ENCODE measurements at regions of chr17 and their contacts with region 1.

Region 1: GRCh38 chr17:20315821-20316220 is 151.5 kb downstream of the LGALS9B start:
- DNase-seq: no peak
- ATAC-seq: no peak
- H3K4me3 ChIP-seq: no peak overlapping the region
- H3K27ac ChIP-seq: no peak overlapping the region
- H3K4me1 ChIP-seq: no peaks in the 10 kb centered on the region
- H3K27me3 ChIP-seq: no peaks in the 10 kb centered on the region
- CTCF ChIP-seq: no peak
- EP300 ChIP-seq: no peak
- POLR2A ChIP-seq: no peak
- RAD21 ChIP-seq: no peak

Region 2: GRCh38 chr17:19992803-19993713 is 322.8 kb before region 1 on chr17:
- CTCF ChIA-PET with region 1: interaction called, 7 read pairs
- POLR2A ChIA-PET with region 1: no interaction called
- RAD21 ChIA-PET with region 1: no interaction called
- SMC1A ChIA-PET with region 1: no interaction called
- in situ Hi-C with region 1: loop called (anchors 5 kb)
- intact Hi-C with region 1: no loop called
- DNase-seq: peak; percentile 20
- ATAC-seq: peak; percentile 100
- H3K4me3 ChIP-seq: no peak overlapping the region
- H3K27ac ChIP-seq: no peak overlapping the region
- H3K4me1 ChIP-seq: no peaks in the 10 kb centered on the region
- H3K27me3 ChIP-seq: no peaks in the 10 kb centered on the region; a peak in 1 of 4 replicates
- CTCF ChIP-seq: peak; percentile 66 to 83 (median 67)
- EP300 ChIP-seq: no peak
- POLR2A ChIP-seq: no peak
- RAD21 ChIP-seq: peak; percentile 82

Region 3: DNA sequence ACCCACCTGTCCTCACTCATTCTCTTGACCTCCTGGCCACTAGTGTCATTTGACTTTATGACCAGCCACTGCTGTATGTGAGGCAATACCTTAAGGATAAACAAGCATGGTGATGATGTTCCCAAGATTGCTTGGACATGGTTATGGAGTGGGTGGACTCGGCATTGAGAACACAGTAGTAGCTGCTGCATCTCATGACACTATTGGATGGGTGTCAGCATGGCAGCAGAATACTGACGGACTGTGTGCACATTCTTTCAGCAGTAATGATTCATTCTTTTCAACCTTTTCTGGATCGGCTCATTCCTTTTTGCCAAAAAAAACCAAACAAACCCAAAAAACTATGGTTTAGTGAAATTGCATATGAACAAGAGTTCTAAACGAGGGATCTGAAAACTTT is 293.1 kb before region 1 on chr17:
- CTCF ChIA-PET with region 1: no interaction called
- POLR2A ChIA-PET with region 1: no interaction called
- RAD21 ChIA-PET with region 1: no interaction called
- SMC1A ChIA-PET with region 1: no interaction called
- in situ Hi-C with region 1: no loop called
- intact Hi-C with region 1: no loop called
- DNase-seq: no peak
- ATAC-seq: no peak
- H3K4me3 ChIP-seq: no peak overlapping the region
- H3K27ac ChIP-seq: no peak overlapping the region
- H3K4me1 ChIP-seq: no peaks in the 10 kb centered on the region
- H3K27me3 ChIP-seq: no peaks in the 10 kb centered on the region
- CTCF ChIP-seq: no peak
- EP300 ChIP-seq: no peak
- POLR2A ChIP-seq: no peak
- RAD21 ChIP-seq: no peak

Region 4: GRCh38 chr17:20121359-20122253 is 194.2 kb before region 1 on chr17:
- CTCF ChIA-PET with region 1: interaction called, 5 read pairs
- POLR2A ChIA-PET with region 1: no interaction called
- RAD21 ChIA-PET with region 1: no interaction called
- SMC1A ChIA-PET with region 1: interaction called, 3 read pairs
- in situ Hi-C with region 1: no loop called
- intact Hi-C with region 1: loop called (anchors 2 kb)
- DNase-seq: peak; percentile 23
- ATAC-seq: peak; percentile 92
- H3K4me3 ChIP-seq: no peak overlapping the region
- H3K27ac ChIP-seq: no peak overlapping the region
- H3K4me1 ChIP-seq: no peaks in the 10 kb centered on the region
- H3K27me3 ChIP-seq: no peaks in the 10 kb centered on the region
- CTCF ChIP-seq: peak; percentile 79 to 95 (median 91)
- EP300 ChIP-seq: no peak
- POLR2A ChIP-seq: no peak
- RAD21 ChIP-seq: peak; percentile 98

Region 5: DNA sequence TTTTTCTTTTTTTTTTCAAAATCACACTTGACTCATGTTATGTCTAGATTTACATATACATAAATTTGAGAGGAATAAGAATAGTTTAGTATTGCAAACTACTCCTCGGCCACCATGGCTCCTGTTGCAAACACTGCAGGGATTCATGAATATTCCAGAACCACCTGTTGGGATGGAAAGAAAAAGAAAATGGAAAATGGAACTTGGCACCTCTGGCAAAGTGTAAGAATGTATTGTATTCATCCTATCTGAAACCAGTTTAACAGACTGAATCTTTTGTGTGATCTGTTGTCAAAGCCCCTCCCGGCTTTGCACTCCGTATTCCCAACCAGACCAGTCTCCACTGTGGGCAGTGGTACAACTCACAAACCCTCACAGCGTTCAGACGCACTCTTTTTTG is 182.3 kb before region 1 on chr17:
- CTCF ChIA-PET with region 1: no interaction called
- POLR2A ChIA-PET with region 1: no interaction called
- RAD21 ChIA-PET with region 1: no interaction called
- SMC1A ChIA-PET with region 1: no interaction called
- in situ Hi-C with region 1: loop called (anchors 10 kb)
- intact Hi-C with region 1: no loop called
- DNase-seq: no peak
- ATAC-seq: no peak
- H3K4me3 ChIP-seq: no peak overlapping the region
- H3K27ac ChIP-seq: no peak overlapping the region
- H3K4me1 ChIP-seq: no peaks in the 10 kb centered on the region
- H3K27me3 ChIP-seq: no peaks in the 10 kb centered on the region
- CTCF ChIP-seq: no peak
- EP300 ChIP-seq: no peak
- POLR2A ChIP-seq: no peak
- RAD21 ChIP-seq: no peak

Region 6: DNA sequence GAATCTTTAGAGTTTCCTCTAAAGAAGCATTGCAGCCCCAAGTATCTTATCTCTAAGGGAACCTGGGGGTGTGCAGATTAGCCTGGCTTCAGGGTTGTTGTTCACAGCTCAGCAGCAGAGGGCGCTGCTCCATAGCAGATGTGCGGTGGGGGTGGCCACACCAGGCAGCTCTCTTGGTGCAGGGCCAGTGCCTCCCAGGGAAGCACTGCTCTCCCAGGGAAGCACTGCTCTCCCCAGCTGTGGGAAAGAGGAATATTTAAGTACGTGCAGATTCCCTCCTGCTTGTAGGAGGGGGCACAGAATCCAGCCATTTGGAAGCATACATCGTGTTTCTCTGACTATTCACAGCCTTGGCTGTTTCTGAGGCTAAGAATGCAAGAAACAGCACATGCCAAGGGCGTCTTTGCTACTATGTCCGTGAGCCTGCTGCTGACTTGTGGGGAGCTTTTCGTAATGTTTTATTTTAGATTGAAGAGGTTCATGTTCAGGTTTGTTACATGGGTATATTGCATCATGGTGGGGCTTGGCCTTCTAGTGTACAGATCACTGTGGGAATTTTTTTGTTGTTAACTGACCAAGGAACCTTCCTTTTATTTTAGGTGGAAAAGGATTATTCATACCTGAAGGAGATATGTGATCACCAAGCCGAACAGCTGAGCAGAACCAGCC is 88.9 kb before region 1 on chr17:
- CTCF ChIA-PET with region 1: interaction called, 13 read pairs
- POLR2A ChIA-PET with region 1: no interaction called
- RAD21 ChIA-PET with region 1: interaction called, 4 read pairs
- SMC1A ChIA-PET with region 1: no interaction called
- in situ Hi-C with region 1: loop called (anchors 5 kb)
- intact Hi-C with region 1: loop called (anchors 5 kb)
- DNase-seq: no peak
- ATAC-seq: peak; percentile 98
- H3K4me3 ChIP-seq: no peak overlapping the region
- H3K27ac ChIP-seq: no peak overlapping the region
- H3K4me1 ChIP-seq: no peaks in the 10 kb centered on the region
- H3K27me3 ChIP-seq: no peaks in the 10 kb centered on the region
- CTCF ChIP-seq: peak; percentile 86 to 87 (median 86)
- EP300 ChIP-seq: no peak
- POLR2A ChIP-seq: no peak
- RAD21 ChIP-seq: peak; percentile 84

Region 7: DNA sequence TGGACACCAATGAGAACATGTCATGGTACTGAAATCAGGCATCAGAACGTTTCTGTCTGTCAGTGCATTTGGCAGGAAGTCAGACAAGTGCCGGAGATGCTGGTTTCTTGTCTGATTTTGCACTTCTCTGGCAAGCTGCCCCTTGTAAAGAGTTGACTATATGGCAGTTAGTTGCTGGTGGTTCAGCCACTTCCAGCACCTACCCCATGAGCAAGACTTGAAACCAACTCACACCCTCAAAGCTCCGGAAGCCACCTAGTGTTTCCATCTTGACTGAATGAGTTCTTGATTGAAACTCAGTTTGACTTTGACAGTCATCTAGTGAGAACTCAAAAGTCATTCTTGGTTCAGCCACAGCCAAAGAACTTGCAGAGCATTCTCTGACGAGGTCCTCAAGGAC is 81.5 kb before region 1 on chr17:
- CTCF ChIA-PET with region 1: interaction called, 3 read pairs
- POLR2A ChIA-PET with region 1: no interaction called
- RAD21 ChIA-PET with region 1: no interaction called
- SMC1A ChIA-PET with region 1: no interaction called
- in situ Hi-C with region 1: loop called (anchors 5 kb)
- intact Hi-C with region 1: loop called (anchors 5 kb)
- DNase-seq: no peak
- ATAC-seq: no peak
- H3K4me3 ChIP-seq: no peak overlapping the region
- H3K27ac ChIP-seq: no peak overlapping the region
- H3K4me1 ChIP-seq: no peaks in the 10 kb centered on the region
- H3K27me3 ChIP-seq: no peaks in the 10 kb centered on the region
- CTCF ChIP-seq: no peak
- EP300 ChIP-seq: no peak
- POLR2A ChIP-seq: no peak
- RAD21 ChIP-seq: no peak

Measured in GM12878 (cell line).